ENCODE measurements at regions of chr4 and their contacts with region 1.

Region 1: DNA sequence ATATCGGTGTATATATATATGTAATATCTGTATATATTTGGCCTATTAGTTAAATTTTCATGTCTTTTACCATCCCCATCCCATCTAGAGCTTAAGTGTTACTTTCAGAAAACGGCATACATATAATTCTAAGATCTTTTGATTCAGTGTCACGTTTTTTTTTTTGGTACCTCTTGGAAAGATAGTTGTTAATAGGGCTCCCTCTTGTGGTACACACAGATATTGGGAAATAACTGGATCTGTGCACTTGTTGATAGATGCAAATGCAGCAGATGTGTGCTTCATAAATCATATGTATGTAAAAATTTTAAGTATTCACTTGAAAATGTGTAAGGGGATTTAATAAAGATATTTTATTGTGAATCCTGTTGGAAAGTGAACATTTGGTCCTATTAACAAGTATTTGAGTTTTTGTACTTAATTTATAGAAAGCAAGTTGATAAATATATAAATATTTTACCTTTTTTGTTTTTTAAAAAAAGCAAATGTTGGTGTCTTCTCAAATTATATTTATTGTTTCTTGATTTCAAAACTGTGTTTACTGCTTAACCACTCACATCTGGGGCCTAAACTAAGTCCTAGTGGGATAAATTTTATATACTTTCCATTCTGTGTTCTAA is 74.7 kb downstream of the PAQR3 start:
- DNase-seq: peak in 2 of 4 donors; percentile 15 to 65
- ATAC-seq: peak; percentile 71
- H3K4me3 ChIP-seq: no peak overlapping the region
- H3K27ac ChIP-seq: no peak overlapping the region
- H3K4me1 ChIP-seq: peaks cover 5% of the 10 kb centered on the region
- H3K27me3 ChIP-seq: no peaks in the 10 kb centered on the region
- CTCF ChIP-seq: peak; percentile 42 to 79 (median 74)
- POLR2A ChIP-seq: no peak

Region 2: DNA sequence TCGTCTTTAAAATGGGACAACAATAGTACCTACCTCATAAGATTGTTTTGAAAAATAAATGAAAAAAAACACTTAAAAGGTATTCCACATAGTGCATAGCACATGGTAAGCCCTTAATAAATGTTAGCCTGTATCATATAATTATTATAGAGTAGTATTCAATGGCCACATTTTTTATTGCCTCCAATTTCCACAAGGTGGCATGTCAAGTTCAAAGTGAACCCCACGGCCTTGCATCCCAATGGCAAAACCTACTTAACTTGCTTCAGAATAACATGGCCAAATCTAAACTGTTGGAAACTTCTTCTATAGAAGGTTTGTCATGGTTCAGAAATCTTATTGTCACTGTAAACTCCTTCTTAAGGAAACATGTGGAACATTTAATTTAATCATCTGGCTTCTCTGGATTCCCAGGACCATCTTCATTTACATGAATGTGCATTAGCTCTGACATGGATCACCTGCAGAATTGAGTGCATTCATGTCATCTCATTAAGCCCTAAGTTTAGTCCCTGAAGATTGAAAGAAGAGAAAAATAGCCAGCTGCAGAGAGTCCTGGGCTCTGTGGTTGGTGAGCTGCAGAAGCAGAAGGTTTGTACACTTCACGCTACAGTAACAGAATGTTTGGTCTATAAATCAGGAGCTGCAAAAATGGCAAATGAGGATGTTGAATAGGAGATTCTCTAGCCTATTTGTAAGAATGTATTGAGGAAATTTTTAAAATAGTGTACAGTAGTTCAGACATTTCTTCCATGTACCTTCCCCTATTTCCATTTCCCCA is 251.9 kb before region 1 on chr4:
- intact Hi-C with region 1: loop called (anchors 10 kb)
- DNase-seq: peak; percentile 24 to 59 (median 42)
- ATAC-seq: peak; percentile 74
- H3K4me3 ChIP-seq: no peak overlapping the region
- H3K27ac ChIP-seq: no peak overlapping the region
- H3K4me1 ChIP-seq: no peaks in the 10 kb centered on the region
- H3K27me3 ChIP-seq: no peaks in the 10 kb centered on the region
- CTCF ChIP-seq: peak in 6 of 7 experiments; percentile 53 to 76 (median 62)
- POLR2A ChIP-seq: no peak

Measured in body of pancreas (tissue), 4 donors.